Mammary epithelial cell (primary cell): ENCODE measurements at regions of chr2 and their contacts with region 1.

Region 1: GRCh38 chr2:197499594-197500526 is at the starts of genes HSPD1 and HSPE1:
- DNase-seq: peak; percentile 100
- H3K4me3 ChIP-seq: peak within 1 kb of the TSS; percentile 75 to 94 (median 88)
- H3K27ac ChIP-seq: peak within 1 kb of the TSS; percentile 79
- H3K4me1 ChIP-seq: peaks cover 31% of the 10 kb centered on the region
- H3K27me3 ChIP-seq: no peaks in the 10 kb centered on the region
- CTCF ChIP-seq: no peak
- total RNA-seq, gene HSPD1: 143 to 350 TPM
- total RNA-seq, gene HSPE1: 30.2 to 118 TPM

Region 2: DNA sequence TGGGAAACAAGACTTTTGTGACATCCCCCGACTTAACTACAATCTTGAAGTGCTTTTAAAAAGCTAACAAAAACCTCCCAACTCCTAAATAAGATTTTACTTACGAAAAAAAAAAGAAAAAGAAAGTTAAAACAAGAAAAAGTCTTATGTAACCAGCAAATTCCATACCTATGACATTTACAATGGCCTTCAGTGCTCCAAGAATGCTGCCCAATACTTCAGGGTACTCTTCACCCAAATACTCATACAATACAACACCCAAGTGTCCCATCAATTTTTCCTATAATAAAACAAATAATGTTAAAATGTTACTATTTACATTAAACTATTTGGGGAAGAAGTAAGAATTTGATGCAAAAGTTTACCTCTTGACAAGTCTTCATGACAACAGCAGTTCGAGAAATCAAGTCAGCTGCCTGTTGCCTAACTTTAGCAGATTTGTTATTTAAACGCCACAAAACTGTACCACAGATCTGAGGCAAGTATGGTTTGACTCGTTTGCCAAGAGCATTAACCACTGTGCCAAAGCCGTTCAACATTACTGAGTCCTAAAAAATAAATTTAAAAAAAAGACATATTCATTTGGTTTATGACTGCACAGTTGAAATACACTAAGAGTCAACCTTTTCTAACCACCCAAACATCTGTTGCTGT is 99.8 kb before region 1 on chr2:
- CTCF ChIA-PET with region 1: no interaction called
- dilution Hi-C with region 1: no loop called
- in situ Hi-C with region 1: no loop called
- intact Hi-C with region 1: loop called (anchors 10 kb)
- DNase-seq: no peak
- H3K4me3 ChIP-seq: no peak overlapping the region
- H3K27ac ChIP-seq: no peak overlapping the region
- H3K4me1 ChIP-seq: peaks cover 8% of the 10 kb centered on the region
- H3K27me3 ChIP-seq: no peaks in the 10 kb centered on the region
- CTCF ChIP-seq: no peak

Region 3: DNA sequence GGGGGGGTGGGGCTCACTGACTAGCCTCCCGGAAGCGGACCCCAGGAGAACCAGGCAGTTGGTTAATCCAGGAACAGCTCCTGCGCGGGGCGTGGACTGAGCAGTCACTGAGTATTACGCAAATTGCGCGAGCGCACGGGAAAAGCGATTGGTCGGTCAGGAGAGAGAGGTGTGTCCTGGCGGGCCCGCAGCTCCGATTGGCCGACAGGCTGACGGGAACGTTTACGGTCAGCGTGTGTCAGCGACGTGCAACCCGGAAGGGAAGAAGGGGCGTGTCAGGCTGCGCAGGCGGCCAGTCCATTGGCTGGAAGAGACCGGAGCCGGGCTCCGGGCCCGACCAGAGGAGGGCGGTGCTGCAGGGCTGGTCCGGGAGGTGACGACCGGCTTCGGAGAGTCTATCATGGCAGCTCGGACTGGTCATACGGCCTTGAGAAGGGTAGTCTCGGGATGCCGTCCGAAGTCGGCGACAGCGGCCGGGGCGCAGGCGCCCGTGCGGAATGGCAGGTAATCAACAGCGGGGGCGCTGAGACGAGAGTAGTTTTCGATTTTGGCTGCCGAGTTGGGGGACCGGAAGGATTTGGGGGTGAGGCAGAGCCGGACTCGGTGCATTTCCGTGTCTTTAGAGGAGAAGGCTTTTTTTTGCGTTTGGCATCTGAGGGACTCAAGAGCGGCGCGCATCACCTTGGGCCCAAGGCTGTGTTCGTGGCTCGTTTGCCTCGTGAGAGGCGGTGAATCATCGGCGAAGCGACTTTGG is 46.5 kb before region 1 on chr2 and contains the start of gene COQ10B:
- CTCF ChIA-PET with region 1: no interaction called
- dilution Hi-C with region 1: loop called (anchors 5 kb)
- in situ Hi-C with region 1: no loop called
- intact Hi-C with region 1: loop called (anchors 2 kb)
- DNase-seq: peak; percentile 99
- H3K4me3 ChIP-seq: peak within 1 kb of the TSS; percentile 80 to 100 (median 84)
- H3K27ac ChIP-seq: peak within 1 kb of the TSS; percentile 98
- H3K4me1 ChIP-seq: peaks cover 13% of the 10 kb centered on the region
- H3K27me3 ChIP-seq: no peaks in the 10 kb centered on the region
- CTCF ChIP-seq: peak in 1 of 2 donors; percentile 37
- total RNA-seq, gene COQ10B: 23.9 to 40.0 TPM

Region 4: GRCh38 chr2:197515739-197516392 is 16.0 kb after region 1 on chr2 and contains the start of gene MOB4:
- CTCF ChIA-PET with region 1: interaction called, 4 read pairs
- dilution Hi-C with region 1: no loop called
- in situ Hi-C with region 1: no loop called
- intact Hi-C with region 1: loop called (anchors 1 kb)
- DNase-seq: peak; percentile 93
- H3K4me3 ChIP-seq: peak within 1 kb of the TSS; percentile 86 to 93 (median 93)
- H3K27ac ChIP-seq: peak within 1 kb of the TSS; percentile 69
- H3K4me1 ChIP-seq: peaks cover 9% of the 10 kb centered on the region
- H3K27me3 ChIP-seq: no peaks in the 10 kb centered on the region
- CTCF ChIP-seq: no peak
- total RNA-seq, gene MOB4: 23.6 to 28.8 TPM

Region 5: GRCh38 chr2:197615016-197615652 is 115.3 kb after region 1 on chr2:
- CTCF ChIA-PET with region 1: no interaction called
- dilution Hi-C with region 1: no loop called
- in situ Hi-C with region 1: no loop called
- intact Hi-C with region 1: loop called (anchors 1 kb)
- DNase-seq: peak; percentile 80
- H3K4me3 ChIP-seq: no peak overlapping the region
- H3K27ac ChIP-seq: no peak overlapping the region
- H3K4me1 ChIP-seq: peaks cover 15% of the 10 kb centered on the region
- H3K27me3 ChIP-seq: no peaks in the 10 kb centered on the region
- CTCF ChIP-seq: peak; percentile 69 to 95

Region 6: GRCh38 chr2:197777823-197778407 is 278.1 kb after region 1 on chr2:
- CTCF ChIA-PET with region 1: no interaction called
- dilution Hi-C with region 1: no loop called
- in situ Hi-C with region 1: no loop called
- intact Hi-C with region 1: loop called (anchors 2 kb)
- DNase-seq: peak; percentile 4
- H3K4me3 ChIP-seq: no peak overlapping the region
- H3K27ac ChIP-seq: no peak overlapping the region
- H3K4me1 ChIP-seq: no peaks in the 10 kb centered on the region
- H3K27me3 ChIP-seq: no peaks in the 10 kb centered on the region
- CTCF ChIP-seq: peak; percentile 60 to 64